ENCODE measurements at regions of chr2 and their contacts with region 1.

Region 1: GRCh38 chr2:98683728-98684127 is 47.2 kb downstream of the MGAT4A start:
- DNase-seq: no peak
- ATAC-seq: no peak
- H3K4me3 ChIP-seq: no peak overlapping the region
- H3K27ac ChIP-seq: no peak overlapping the region
- H3K4me1 ChIP-seq: no peaks in the 10 kb centered on the region
- H3K27me3 ChIP-seq: peaks cover 2% of the 10 kb centered on the region; the same call in 1 of the 2 replicates
- CTCF ChIP-seq: no peak

Region 2: DNA sequence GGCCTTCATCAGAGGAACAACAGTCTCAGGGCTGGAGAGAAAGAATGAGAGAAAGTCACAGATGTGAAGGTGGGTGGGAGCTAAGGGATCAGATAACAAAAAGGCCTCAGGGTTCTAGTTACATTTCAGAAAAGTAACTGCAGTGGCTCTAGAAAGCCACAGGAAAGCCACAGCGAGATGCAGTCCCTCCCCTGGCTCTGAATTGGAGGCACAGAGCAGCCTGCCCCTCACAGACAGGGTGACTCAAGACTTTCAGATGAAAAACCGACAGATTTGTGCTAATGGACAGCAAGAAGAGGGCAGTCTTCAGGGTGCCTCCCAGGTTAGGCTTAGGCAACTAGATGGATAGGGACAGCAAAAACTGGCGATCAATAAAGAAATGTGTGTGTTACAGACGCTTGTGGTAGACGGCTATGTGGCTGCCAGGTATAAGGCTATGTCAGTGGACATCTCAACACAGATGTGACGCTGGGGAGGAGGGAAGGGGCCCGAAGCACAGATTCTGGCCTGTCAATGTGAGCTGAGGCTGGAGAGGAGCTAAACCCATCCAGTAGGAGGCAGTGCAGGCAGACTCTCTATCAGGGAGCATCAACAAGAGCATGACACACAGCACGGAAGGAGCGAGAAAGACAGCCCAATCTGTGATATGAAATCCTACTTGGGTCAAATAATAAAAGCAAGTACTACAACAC is 49.2 kb before region 1 on chr2:
- CTCF ChIA-PET with region 1: no interaction called
- POLR2A ChIA-PET with region 1: interaction called, 13 read pairs
- in situ Hi-C with region 1: no loop called
- intact Hi-C with region 1: no loop called
- DNase-seq: no peak
- ATAC-seq: no peak
- H3K4me3 ChIP-seq: no peak overlapping the region
- H3K27ac ChIP-seq: no peak overlapping the region
- H3K4me1 ChIP-seq: no peaks in the 10 kb centered on the region
- H3K27me3 ChIP-seq: peaks cover 2% of the 10 kb centered on the region; the same call in 1 of the 2 replicates
- CTCF ChIP-seq: peak; percentile 53

Measured in Panc1 (cell line).